Heart left ventricle (tissue), 16 donors: ENCODE measurements at regions of chr22 and their contacts with region 1.

Region 1: GRCh38 chr22:17368554-17369438 is 464 bp upstream of the CECR2 start:
- DNase-seq: peak; percentile 58 to 78 (median 67)
- ATAC-seq: peak; percentile 52 to 80 (median 74)
- H3K4me3 ChIP-seq: peak overlapping the region; percentile 41 to 81 (median 75)
- H3K27ac ChIP-seq: peak overlapping the region; percentile 51 to 90 (median 84)
- H3K4me1 ChIP-seq: peaks cover 0 to 26% (median 11%) of the 10 kb centered on the region in 12 donors
- H3K27me3 ChIP-seq: peaks cover 0 to 66% (median 3%) of the 10 kb centered on the region in 9 donors
- CTCF ChIP-seq: peak in 1 of 12 donors; percentile 7
- POLR2A ChIP-seq: peak in 1 of 2 donors; percentile 12

Region 2: DNA sequence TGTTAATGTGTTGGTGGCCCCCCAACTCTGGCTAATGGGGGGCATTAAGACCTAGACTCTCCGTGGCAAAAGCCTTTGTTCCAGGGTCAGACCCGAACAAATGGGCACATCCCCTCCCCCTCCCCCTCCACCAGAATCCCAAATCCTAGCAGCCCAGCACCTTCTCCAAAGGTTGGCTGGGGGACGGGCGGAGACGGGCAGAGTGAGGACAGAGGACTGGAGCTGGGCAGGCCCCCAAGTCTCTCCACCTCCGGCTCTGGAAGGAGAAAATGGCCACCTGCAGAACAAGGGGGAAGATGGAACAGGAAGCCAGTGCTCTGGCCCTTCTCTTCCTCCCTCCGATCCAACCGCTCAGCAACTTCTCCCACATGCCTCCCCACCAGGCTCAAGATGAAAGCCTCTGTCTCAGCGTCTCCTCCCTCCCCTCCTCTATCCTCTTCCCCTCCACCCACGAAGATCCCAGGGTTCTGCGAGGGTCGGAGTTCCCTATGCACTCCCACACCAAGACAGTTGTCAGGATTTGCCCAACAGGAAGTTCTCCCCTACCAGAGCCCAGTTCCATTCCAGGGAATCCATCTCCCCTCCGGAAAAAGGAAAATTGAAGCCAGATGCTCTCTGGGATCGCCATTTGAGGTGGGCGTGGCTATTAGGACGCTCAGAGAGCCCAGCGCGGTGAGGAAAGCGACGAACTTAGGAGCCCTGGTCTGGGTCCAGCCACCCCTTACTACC is 169.6 kb before region 1 on chr22:
- intact Hi-C with region 1: loop called in 4 of 10 experiments (anchors 5 to 10 kb)
- DNase-seq: peak in 4 of 5 donors; percentile 50 to 69 (median 66)
- ATAC-seq: peak; percentile 43 to 82 (median 76)
- H3K4me3 ChIP-seq: peak overlapping the region; percentile 1 to 62 (median 53)
- H3K27ac ChIP-seq: peak overlapping the region; percentile 66 to 92 (median 87)
- H3K4me1 ChIP-seq: peaks cover 0 to 21% (median 7%) of the 10 kb centered on the region in 12 donors
- H3K27me3 ChIP-seq: no peaks in the 10 kb centered on the region
- CTCF ChIP-seq: no peak
- POLR2A ChIP-seq: no peak

Region 3: GRCh38 chr22:17264321-17265052 is 104.3 kb before region 1 on chr22:
- intact Hi-C with region 1: loop called in 1 of 10 experiments (anchors 5 kb)
- DNase-seq: peak in 3 of 5 donors; percentile 44 to 57 (median 53)
- ATAC-seq: peak; percentile 57 to 80 (median 69)
- H3K4me3 ChIP-seq: peak overlapping the region in 5 of 12 donors; percentile 7 to 19 (median 16)
- H3K27ac ChIP-seq: peak overlapping the region; percentile 16 to 88 (median 71)
- H3K4me1 ChIP-seq: peaks cover 0 to 29% (median 3%) of the 10 kb centered on the region in 12 donors
- H3K27me3 ChIP-seq: peaks cover 0 to 7% (median 0%) of the 10 kb centered on the region in 9 donors
- CTCF ChIP-seq: no peak
- POLR2A ChIP-seq: no peak

Region 4: GRCh38 chr22:17477391-17477833 is 108.6 kb after region 1 on chr22:
- intact Hi-C with region 1: loop called in 5 of 10 experiments (anchors 5 to 10 kb)
- DNase-seq: peak; percentile 24 to 71 (median 54)
- ATAC-seq: peak; percentile 57 to 93 (median 86)
- H3K4me3 ChIP-seq: peak overlapping the region in 10 of 12 donors; percentile 7 to 51 (median 34)
- H3K27ac ChIP-seq: peak overlapping the region in 8 of 12 donors; percentile 20 to 50 (median 39)
- H3K4me1 ChIP-seq: peaks cover 0 to 21% (median 7%) of the 10 kb centered on the region in 12 donors
- H3K27me3 ChIP-seq: no peaks in the 10 kb centered on the region
- CTCF ChIP-seq: no peak
- POLR2A ChIP-seq: no peak

Region 5: DNA sequence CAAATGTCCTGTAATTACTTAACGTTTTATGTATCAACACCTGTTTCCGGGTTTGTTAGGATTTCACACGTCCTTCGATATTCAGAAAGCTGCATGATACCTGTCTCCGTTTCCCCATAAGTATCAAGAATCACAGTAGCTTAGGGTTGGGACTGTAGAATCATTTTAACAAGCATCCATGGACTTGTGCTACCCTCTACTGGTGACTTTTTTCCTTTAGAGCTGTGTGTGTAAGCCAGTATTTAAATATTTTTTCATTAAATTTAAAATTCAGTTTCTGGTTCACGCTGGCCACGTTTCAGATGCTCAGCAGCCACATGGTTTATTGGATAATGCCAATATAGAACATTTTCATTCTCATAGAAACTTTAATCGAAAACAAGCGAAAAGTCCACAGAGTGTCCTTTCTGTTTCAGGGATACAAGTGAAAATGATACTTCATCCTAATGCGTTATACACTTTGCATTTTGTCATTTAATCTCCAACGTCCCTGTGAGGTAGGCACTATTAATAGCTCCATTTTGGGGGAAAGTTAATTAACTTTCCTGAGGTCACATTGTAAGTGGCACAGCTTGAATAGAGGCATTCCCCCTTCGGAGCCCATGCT is 133.0 kb after region 1 on chr22:
- intact Hi-C with region 1: loop called in 5 of 10 experiments (anchors 2 to 10 kb)
- DNase-seq: peak in 2 of 5 donors; percentile 19 to 26
- ATAC-seq: peak; percentile 76 to 88 (median 86)
- H3K4me3 ChIP-seq: no peak overlapping the region
- H3K27ac ChIP-seq: no peak overlapping the region
- H3K4me1 ChIP-seq: no peaks in the 10 kb centered on the region
- H3K27me3 ChIP-seq: no peaks in the 10 kb centered on the region
- CTCF ChIP-seq: peak; percentile 51 to 81 (median 69)
- POLR2A ChIP-seq: no peak

Region 6: DNA sequence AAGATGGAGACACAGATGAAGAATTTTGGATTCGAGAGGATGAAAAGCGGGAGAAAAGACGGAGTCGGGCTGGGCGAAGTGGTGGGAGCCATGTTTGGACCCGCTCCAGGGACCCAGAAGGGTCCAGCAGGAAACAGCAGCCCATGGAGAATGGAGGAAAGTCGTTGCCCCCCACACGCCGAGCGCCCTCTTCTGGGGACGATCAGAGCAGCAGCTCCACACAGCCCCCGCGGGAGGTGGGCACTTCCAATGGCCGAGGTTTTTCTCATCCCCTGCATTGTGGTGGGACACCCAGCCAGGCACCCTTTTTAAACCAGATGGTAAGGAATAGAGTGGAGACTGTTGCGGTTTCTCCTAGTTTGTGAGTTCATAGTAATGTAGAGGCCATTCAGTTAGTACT is 171.7 kb after region 1 on chr22:
- intact Hi-C with region 1: no loop called
- DNase-seq: no peak
- ATAC-seq: no peak
- H3K4me3 ChIP-seq: no peak overlapping the region
- H3K27ac ChIP-seq: no peak overlapping the region
- H3K4me1 ChIP-seq: no peaks in the 10 kb centered on the region
- H3K27me3 ChIP-seq: no peaks in the 10 kb centered on the region
- CTCF ChIP-seq: peak in 1 of 12 donors; percentile 15
- POLR2A ChIP-seq: no peak